CD4-positive, alpha-beta T cell (primary cell): ENCODE measurements at regions of chr1 and their contacts with region 1.

Region 1: DNA sequence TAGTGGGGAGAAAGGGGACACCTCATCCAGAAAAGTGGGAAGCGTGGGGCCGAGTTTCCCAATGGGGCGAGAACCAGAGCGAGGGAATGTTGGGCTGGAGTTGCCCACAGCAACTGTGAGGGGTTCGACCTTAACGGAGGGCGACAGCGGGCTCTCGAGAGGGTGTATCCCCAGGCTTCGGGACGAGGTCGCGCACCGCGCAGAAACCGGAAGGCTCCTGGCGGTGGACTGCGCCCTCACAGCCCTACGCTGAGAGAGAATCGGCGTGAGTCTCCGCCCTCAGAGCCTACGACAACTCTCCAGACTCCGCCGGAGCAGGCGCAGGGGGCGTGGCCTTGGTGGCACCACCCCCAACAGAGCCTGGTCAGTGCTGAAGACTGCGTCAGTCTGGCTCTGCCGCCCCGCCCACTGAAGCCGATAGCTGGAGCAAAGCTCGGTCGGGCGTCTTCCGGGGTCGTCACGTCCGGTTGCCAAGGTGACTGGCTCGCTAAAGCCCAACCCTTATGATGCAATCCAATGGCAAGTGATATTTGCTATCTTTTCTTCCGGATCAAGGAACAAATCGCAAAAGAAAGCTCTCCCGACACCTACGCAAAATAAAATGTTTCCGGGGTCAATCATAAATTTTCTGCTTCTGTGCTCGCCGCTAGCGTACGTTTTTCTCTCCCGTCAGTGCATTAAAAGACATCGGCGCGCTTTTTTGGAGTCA is at the start of gene LRIF1:
- DNase-seq: peak; percentile 99 to 100 (median 100)
- ATAC-seq: peak; percentile 95
- H3K4me3 ChIP-seq: peak within 1 kb of the TSS; percentile 76
- H3K4me3 Mint-ChIP-seq: peak within 1 kb of the TSS; percentile 90
- H3K27ac ChIP-seq: peak within 1 kb of the TSS; percentile 94 to 100
- H3K27ac Mint-ChIP-seq: peak within 1 kb of the TSS; percentile 93
- H3K4me1 ChIP-seq: peaks cover 12% of the 10 kb centered on the region
- H3K4me1 Mint-ChIP-seq: peaks cover 36% of the 10 kb centered on the region
- H3K27me3 ChIP-seq: peaks cover 4 to 9% of the 10 kb centered on the region in 2 experiments
- H3K27me3 Mint-ChIP-seq: peaks cover 15% of the 10 kb centered on the region
- CTCF ChIP-seq: no peak
- total RNA-seq, gene LRIF1: 1.6 to 1.8 TPM

Region 2: DNA sequence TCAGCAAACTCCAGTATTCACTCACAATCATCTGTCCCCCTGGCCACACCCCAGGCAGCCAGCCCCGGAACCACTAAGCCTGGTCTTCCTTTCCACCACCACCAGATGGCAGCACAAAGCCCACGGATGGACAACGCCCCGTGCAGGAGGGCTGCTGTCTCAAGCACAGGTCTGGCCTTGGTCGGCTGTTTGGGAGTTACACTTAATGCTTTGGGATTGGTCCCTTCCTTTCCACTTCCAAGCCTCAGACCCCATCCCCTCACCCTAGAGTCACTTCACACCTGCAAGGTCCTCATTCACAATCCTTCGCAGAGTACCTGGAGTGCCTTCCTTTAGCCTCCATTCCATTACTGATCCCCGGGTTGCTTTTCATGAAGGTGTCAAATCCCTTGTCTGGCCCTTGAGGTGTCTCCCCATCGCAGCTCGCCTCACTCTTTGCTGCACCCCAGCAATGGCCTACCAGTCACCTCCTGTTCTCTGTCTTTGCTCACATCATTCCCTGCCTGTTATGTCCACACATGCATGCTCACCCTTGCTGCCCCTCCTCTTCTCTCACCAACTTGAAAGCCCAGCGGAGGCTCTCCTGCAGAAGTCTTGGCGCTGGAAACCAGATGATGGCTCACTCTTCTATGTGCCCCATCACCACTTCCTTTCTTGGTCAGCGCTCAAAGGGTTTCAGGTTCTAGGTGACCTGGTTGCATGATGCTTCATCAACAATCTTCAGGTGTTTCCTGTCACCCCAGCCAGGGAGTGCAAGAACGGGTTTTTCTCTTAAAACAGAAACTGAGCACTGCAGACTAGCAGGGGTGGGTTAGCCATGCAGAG is 332.8 kb before region 1 on chr1:
- CTCF ChIA-PET with region 1: no interaction called
- POLR2A ChIA-PET with region 1: no interaction called
- intact Hi-C with region 1: loop called in 1 of 2 experiments (anchors 5 kb)
- DNase-seq: peak; percentile 77 to 93 (median 83)
- ATAC-seq: peak; percentile 72
- H3K4me3 ChIP-seq: peak overlapping the region; percentile 43
- H3K4me3 Mint-ChIP-seq: no peak overlapping the region
- H3K27ac ChIP-seq: peak overlapping the region; percentile 66 to 75
- H3K27ac Mint-ChIP-seq: no peak overlapping the region
- H3K4me1 ChIP-seq: peaks cover 87% of the 10 kb centered on the region
- H3K4me1 Mint-ChIP-seq: peaks cover 47% of the 10 kb centered on the region
- H3K27me3 ChIP-seq: no peaks in the 10 kb centered on the region
- H3K27me3 Mint-ChIP-seq: no peaks in the 10 kb centered on the region
- CTCF ChIP-seq: peak; percentile 87

Region 3: GRCh38 chr1:110686188-110686587 is 277.7 kb before region 1 on chr1:
- CTCF ChIA-PET with region 1: no interaction called
- POLR2A ChIA-PET with region 1: no interaction called
- intact Hi-C with region 1: no loop called
- DNase-seq: peak in 12 of 14 experiments; percentile 8 to 71 (median 32)
- ATAC-seq: peak; percentile 79
- H3K4me3 ChIP-seq: no peak overlapping the region
- H3K4me3 Mint-ChIP-seq: no peak overlapping the region
- H3K27ac ChIP-seq: no peak overlapping the region
- H3K27ac Mint-ChIP-seq: no peak overlapping the region
- H3K4me1 ChIP-seq: peaks cover 4% of the 10 kb centered on the region
- H3K4me1 Mint-ChIP-seq: no peaks in the 10 kb centered on the region
- H3K27me3 ChIP-seq: no peaks in the 10 kb centered on the region
- H3K27me3 Mint-ChIP-seq: no peaks in the 10 kb centered on the region
- CTCF ChIP-seq: peak; percentile 58

Region 4: GRCh38 chr1:110896090-110896489 is 67.8 kb before region 1 on chr1:
- CTCF ChIA-PET with region 1: interaction called, 4 read pairs
- POLR2A ChIA-PET with region 1: interaction called, 5 read pairs
- intact Hi-C with region 1: loop called in 1 of 2 experiments (anchors 2 kb)
- DNase-seq: peak in 3 of 14 experiments; percentile 65 to 77 (median 71)
- ATAC-seq: peak; percentile 66
- H3K4me3 ChIP-seq: no peak overlapping the region
- H3K4me3 Mint-ChIP-seq: peak overlapping the region; percentile 68
- H3K27ac ChIP-seq: peak overlapping the region; percentile 29 to 38
- H3K27ac Mint-ChIP-seq: peak overlapping the region; percentile 92
- H3K4me1 ChIP-seq: peaks cover 73% of the 10 kb centered on the region
- H3K4me1 Mint-ChIP-seq: peaks cover 86% of the 10 kb centered on the region
- H3K27me3 ChIP-seq: no peaks in the 10 kb centered on the region
- H3K27me3 Mint-ChIP-seq: no peaks in the 10 kb centered on the region
- CTCF ChIP-seq: no peak

Region 5: DNA sequence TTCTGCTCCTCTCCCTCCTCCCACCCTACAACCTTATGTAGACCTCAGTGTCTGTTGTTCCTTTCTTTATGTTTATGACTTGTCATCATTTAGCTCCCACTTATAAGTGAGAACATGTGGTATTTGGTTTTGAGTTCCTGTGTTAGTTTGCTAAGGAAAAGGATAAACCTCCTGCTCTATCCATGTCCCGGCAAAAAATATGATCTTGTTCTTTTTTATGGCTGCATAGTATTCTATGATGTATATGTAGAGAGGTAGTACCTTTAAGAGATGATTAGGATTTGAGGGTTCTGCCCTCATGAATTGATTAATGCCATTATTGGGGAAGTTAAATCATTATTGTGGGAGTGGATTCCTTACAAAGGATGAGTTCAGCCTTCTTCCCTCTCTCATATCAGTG is 41.9 kb before region 1 on chr1:
- CTCF ChIA-PET with region 1: no interaction called
- POLR2A ChIA-PET with region 1: interaction called, 3 read pairs
- intact Hi-C with region 1: loop called in 1 of 2 experiments (anchors 5 kb)
- DNase-seq: no peak
- ATAC-seq: no peak
- H3K4me3 ChIP-seq: no peak overlapping the region
- H3K4me3 Mint-ChIP-seq: no peak overlapping the region
- H3K27ac ChIP-seq: no peak overlapping the region
- H3K27ac Mint-ChIP-seq: no peak overlapping the region
- H3K4me1 ChIP-seq: peaks cover 2% of the 10 kb centered on the region
- H3K4me1 Mint-ChIP-seq: peaks cover 4% of the 10 kb centered on the region
- H3K27me3 ChIP-seq: no peaks in the 10 kb centered on the region
- H3K27me3 Mint-ChIP-seq: peaks cover 13% of the 10 kb centered on the region
- CTCF ChIP-seq: no peak

Region 6: GRCh38 chr1:111214074-111214801 is 250.4 kb after region 1 on chr1:
- CTCF ChIA-PET with region 1: no interaction called
- POLR2A ChIA-PET with region 1: interaction called, 12 read pairs
- intact Hi-C with region 1: loop called (anchors 5 kb)
- DNase-seq: peak in 1 of 14 experiments; percentile 12
- ATAC-seq: no peak
- H3K4me3 ChIP-seq: no peak overlapping the region
- H3K4me3 Mint-ChIP-seq: peak overlapping the region; percentile 80
- H3K27ac ChIP-seq: peak overlapping the region; percentile 76 to 88
- H3K27ac Mint-ChIP-seq: peak overlapping the region; percentile 98
- H3K4me1 ChIP-seq: peaks cover 69% of the 10 kb centered on the region
- H3K4me1 Mint-ChIP-seq: peaks cover 94% of the 10 kb centered on the region
- H3K27me3 ChIP-seq: no peaks in the 10 kb centered on the region
- H3K27me3 Mint-ChIP-seq: peaks cover 5% of the 10 kb centered on the region
- CTCF ChIP-seq: no peak